Panc1 (cell line): ENCODE measurements at regions of chr15 and their contacts with region 1.

Region 1: GRCh38 chr15:78836333-78836732 is 25.1 kb upstream of the ADAMTS7 start:
- DNase-seq: no peak
- ATAC-seq: no peak
- H3K4me3 ChIP-seq: no peak overlapping the region
- H3K27ac ChIP-seq: no peak overlapping the region
- H3K4me1 ChIP-seq: no peaks in the 10 kb centered on the region
- H3K27me3 ChIP-seq: no peaks in the 10 kb centered on the region
- CTCF ChIP-seq: no peak

Region 2: GRCh38 chr15:78822514-78822913 is 13.8 kb before region 1 on chr15:
- CTCF ChIA-PET with region 1: interaction called, 8 read pairs
- POLR2A ChIA-PET with region 1: interaction called, 11 read pairs
- in situ Hi-C with region 1: no loop called
- intact Hi-C with region 1: no loop called
- DNase-seq: no peak
- ATAC-seq: no peak
- H3K4me3 ChIP-seq: no peak overlapping the region
- H3K27ac ChIP-seq: no peak overlapping the region
- H3K4me1 ChIP-seq: no peaks in the 10 kb centered on the region
- H3K27me3 ChIP-seq: no peaks in the 10 kb centered on the region; the same call in 1 of the 2 replicates
- CTCF ChIP-seq: no peak

Region 3: DNA sequence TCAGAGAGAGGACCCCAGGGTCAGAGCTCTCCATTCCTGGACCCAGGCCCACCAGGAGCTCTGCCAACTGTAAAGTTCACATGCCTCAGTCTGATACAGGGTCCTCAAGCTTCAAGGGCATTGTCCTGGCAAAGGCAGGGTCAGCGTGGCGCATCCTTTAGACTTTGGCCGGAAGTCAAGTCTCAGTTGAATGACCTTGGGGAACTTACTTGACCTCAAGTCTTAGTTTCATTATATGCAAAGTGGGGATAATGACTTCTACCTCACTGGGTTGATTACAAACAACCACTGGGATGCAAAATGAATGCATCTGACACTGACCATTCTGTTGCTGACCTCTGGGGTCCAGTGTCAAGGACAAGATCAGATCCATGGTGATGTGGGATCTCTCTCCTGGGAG is 179.1 kb after region 1 on chr15:
- CTCF ChIA-PET with region 1: no interaction called
- POLR2A ChIA-PET with region 1: no interaction called
- in situ Hi-C with region 1: no loop called
- intact Hi-C with region 1: no loop called
- DNase-seq: no peak
- ATAC-seq: no peak
- H3K4me3 ChIP-seq: no peak overlapping the region
- H3K27ac ChIP-seq: no peak overlapping the region
- H3K4me1 ChIP-seq: no peaks in the 10 kb centered on the region
- H3K27me3 ChIP-seq: no peaks in the 10 kb centered on the region
- CTCF ChIP-seq: no peak